OCI-LY7 (cell line): ENCODE measurements at regions of chr1 and their contacts with region 1.

Region 1: DNA sequence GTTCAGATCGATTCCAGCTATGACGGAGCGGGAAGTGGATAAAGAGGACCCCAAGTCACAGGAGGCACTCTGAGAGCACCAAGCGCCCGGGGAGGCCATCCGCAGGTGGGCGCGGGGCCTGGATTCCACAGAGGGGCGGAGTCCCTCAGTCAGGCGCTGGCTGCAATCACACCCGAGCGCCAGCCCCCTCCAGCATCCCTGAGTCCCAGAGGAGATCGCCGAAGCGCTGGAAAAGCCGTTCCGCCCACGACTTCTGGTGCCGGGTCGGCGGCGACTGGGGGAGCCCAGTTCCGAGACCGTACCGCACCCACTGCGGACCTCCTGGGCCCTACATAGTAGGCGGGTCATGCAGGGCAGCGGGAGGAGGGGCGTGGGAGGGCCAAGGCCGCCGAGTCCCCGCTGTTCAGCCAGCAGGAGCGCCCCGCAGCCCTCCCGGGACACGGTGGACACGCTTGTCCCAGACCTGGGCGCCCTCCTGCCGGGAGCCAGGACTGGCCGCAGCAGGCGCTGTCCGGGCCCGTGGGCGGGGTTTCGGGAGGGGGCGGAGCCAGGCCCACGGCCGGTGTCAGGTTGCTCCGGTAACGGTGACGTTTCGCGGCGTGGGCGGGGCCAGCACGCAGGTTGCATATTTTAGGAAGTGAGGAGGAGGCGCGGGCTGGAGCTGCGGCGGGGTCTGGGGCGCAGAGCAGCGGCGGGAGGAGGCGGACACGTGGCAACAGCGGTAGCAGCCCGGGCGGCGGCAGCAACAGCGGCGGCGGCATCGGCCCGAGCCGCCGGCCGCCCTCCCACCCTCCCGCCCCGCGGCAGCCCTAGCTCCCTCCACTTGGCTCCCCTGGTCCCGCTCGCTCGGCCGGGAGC is at the start of gene ATP1A1:
- DNase-seq: peak; percentile 96
- H3K4me3 ChIP-seq: peak within 1 kb of the TSS; percentile 74
- H3K27ac ChIP-seq: peak within 1 kb of the TSS; percentile 70
- H3K4me1 ChIP-seq: peaks cover 38% of the 10 kb centered on the region
- CTCF ChIP-seq: 0 out of 2 replicates have a peak, but pooled peaks have one; percentile 17
- total RNA-seq, gene ATP1A1: 66.8 and 74.4 TPM in 2 replicates

Region 2: GRCh38 chr1:116348751-116349150 is 24.1 kb before region 1 on chr1:
- CTCF ChIA-PET with region 1: interaction called, 5 read pairs
- POLR2A ChIA-PET with region 1: interaction called, 11 read pairs
- intact Hi-C with region 1: no loop called
- DNase-seq: no peak
- H3K4me3 ChIP-seq: no peak overlapping the region
- H3K27ac ChIP-seq: no peak overlapping the region
- H3K4me1 ChIP-seq: peaks cover 28% of the 10 kb centered on the region
- CTCF ChIP-seq: no peak

Region 3: DNA sequence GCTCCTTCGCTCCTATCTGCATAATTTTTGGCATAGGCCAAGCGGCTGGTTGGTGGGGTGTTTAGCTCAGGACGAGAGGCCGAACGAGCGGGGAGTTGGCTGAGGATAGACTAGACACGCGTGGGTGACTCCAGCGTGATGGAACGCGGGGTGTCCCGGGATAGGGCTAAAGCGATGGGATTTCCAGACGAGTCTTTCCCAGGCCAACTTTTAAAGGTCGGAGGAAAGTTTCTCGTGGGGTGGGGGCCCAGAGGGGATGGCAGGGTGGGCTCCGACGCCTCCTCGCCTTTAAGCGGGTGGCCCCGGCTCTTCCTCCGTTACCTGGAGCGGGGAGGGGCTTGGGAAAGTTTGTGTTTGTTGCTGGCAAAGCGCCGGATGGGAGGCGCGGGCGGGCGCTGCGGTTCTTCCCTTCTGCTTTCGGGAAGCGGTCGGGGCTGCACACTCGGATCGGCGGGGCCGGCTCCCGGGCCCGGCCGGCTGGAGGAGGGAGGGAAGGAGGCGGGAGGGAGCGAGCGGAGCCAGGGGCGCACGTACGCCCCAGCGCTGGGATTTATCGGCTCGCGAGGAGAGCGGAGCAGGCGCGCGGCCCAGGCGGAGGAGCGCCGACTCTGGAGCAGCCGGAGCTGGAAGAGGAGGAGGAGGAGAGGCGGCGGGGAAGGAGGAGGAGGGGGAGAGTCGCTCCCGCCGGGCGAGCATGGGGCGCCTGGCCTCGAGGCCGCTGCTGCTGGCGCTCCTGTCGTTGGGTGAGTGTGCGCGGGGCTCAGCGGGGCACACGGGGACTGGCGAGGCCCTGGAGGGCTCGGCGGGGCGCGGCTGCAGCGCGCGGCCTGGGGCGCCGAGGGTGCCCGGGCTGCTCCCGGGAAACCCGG is 536.9 kb after region 1 on chr1 and contains the start of gene PTGFRN:
- CTCF ChIA-PET with region 1: no interaction called
- POLR2A ChIA-PET with region 1: no interaction called
- intact Hi-C with region 1: no loop called
- DNase-seq: no peak
- H3K4me3 ChIP-seq: no peak within 1 kb of the TSS
- H3K27ac ChIP-seq: no peak within 1 kb of the TSS
- H3K4me1 ChIP-seq: no peaks in the 10 kb centered on the region
- CTCF ChIP-seq: no peak
- total RNA-seq, gene PTGFRN: not detected in 2 replicates

Region 4: GRCh38 chr1:117110774-117111173 is 738.0 kb after region 1 on chr1:
- CTCF ChIA-PET with region 1: no interaction called
- POLR2A ChIA-PET with region 1: no interaction called
- intact Hi-C with region 1: no loop called
- DNase-seq: no peak
- H3K4me3 ChIP-seq: no peak overlapping the region
- H3K27ac ChIP-seq: no peak overlapping the region
- H3K4me1 ChIP-seq: no peaks in the 10 kb centered on the region
- CTCF ChIP-seq: no peak